Activated B cell treated with CpG ODN at 0.5 μM for 24 hours (primary cell): ENCODE measurements at regions of chr4 and their contacts with region 1.

Region 1: DNA sequence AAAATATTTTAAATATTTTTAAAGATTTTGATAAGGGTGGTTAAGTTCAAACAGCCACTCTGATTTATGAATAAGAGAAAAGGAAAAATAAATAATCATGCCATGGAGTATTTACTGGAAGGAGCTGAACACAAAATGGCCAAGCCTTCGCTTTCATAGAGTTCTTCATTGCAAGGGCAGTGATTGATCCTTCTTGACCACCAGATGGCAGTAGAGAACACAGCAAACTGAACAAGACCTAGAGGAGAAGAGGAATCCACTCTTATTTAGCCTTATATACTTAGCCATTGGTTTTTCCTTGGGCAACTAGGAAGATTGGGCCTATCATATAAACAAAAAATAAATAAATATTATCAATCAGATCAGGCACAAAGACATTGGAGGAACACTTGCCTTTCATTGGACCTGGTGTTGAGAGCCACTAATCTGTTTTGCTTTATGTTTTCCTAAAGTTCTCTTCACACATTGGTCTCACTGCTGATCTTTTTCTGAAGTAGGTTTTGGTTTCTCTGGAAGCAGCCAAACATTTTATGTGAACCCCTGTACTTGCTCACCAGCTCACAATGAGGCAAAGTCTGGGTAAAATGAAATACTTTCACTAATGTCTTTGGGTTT is 58.1 kb upstream of the PARM1 start:
- DNase-seq: no peak
- ATAC-seq: peak; percentile 81
- H3K4me3 Mint-ChIP-seq: no peak overlapping the region
- H3K27ac Mint-ChIP-seq: no peak overlapping the region
- H3K4me1 Mint-ChIP-seq: peaks cover 16% of the 10 kb centered on the region
- H3K27me3 Mint-ChIP-seq: peaks cover 9% of the 10 kb centered on the region
- CTCF ChIP-seq: peak; percentile 67

Region 2: GRCh38 chr4:74919783-74920182 is 44.9 kb after region 1 on chr4:
- CTCF ChIA-PET with region 1: interaction called, 16 read pairs
- POLR2A ChIA-PET with region 1: no interaction called
- intact Hi-C with region 1: no loop called
- DNase-seq: no peak
- ATAC-seq: no peak
- H3K4me3 Mint-ChIP-seq: peak overlapping the region; percentile 76
- H3K27ac Mint-ChIP-seq: peak overlapping the region; percentile 7
- H3K4me1 Mint-ChIP-seq: peaks cover 20% of the 10 kb centered on the region
- H3K27me3 Mint-ChIP-seq: peaks cover 2% of the 10 kb centered on the region
- CTCF ChIP-seq: no peak

Region 3: DNA sequence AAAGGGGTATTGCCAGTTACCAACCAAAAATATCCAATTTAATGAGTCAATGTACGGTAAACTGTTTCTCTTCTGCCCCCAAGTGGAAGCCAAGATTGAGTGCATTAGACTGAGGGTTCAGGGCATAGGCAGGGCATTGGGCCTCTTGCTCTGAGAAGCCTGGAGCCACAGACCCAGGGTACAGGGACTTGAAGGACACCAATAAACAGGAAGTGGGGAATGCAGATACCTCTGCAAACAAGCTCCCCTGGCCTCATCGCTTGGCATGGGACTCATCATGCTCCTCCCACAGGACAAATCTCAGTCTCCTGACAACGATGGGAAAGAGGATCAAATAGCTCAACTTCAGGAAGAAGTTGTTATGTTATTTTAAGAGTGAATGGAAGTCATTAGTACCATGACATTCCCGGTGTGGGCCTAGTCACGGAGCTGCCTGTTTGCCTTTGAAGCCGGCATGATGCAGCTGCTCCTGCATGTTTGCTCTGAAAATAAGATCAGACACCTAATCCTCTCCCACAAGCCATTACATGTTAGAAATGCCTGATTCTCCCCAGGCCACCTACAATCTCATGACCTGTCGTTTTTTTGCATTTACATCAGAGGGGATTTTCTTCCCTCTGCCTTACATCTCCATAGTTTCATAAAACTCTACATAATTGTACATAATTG is 415.2 kb after region 1 on chr4:
- CTCF ChIA-PET with region 1: interaction called, 68 read pairs
- POLR2A ChIA-PET with region 1: no interaction called
- intact Hi-C with region 1: loop called (anchors 1 kb)
- DNase-seq: no peak
- ATAC-seq: peak; percentile 49
- H3K4me3 Mint-ChIP-seq: no peak overlapping the region
- H3K27ac Mint-ChIP-seq: no peak overlapping the region
- H3K4me1 Mint-ChIP-seq: peaks cover 8% of the 10 kb centered on the region
- H3K27me3 Mint-ChIP-seq: no peaks in the 10 kb centered on the region
- CTCF ChIP-seq: peak; percentile 25

Region 4: DNA sequence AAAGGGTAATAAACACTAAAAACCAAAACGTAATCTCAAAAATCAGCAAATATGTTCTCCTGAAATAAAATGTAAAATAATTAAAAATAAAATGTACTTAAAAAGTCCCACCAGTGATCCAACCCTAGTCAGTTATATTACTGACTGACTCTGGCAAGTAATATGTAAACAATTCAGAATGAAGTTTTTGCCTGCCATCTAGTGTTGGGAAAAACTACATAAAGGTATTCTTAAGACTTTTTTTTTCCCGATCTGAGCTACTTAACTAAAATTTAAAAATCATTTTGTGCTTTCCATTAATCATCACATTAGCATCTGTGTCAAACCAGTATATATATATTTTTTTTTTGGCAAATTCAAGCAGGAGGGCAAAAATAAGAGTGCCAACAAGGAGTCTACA is 615.3 kb after region 1 on chr4:
- CTCF ChIA-PET with region 1: interaction called, 17 read pairs
- POLR2A ChIA-PET with region 1: no interaction called
- intact Hi-C with region 1: loop called (anchors 1 kb)
- DNase-seq: no peak
- ATAC-seq: no peak
- H3K4me3 Mint-ChIP-seq: no peak overlapping the region
- H3K27ac Mint-ChIP-seq: no peak overlapping the region
- H3K4me1 Mint-ChIP-seq: no peaks in the 10 kb centered on the region
- H3K27me3 Mint-ChIP-seq: no peaks in the 10 kb centered on the region
- CTCF ChIP-seq: no peak

Region 5: DNA sequence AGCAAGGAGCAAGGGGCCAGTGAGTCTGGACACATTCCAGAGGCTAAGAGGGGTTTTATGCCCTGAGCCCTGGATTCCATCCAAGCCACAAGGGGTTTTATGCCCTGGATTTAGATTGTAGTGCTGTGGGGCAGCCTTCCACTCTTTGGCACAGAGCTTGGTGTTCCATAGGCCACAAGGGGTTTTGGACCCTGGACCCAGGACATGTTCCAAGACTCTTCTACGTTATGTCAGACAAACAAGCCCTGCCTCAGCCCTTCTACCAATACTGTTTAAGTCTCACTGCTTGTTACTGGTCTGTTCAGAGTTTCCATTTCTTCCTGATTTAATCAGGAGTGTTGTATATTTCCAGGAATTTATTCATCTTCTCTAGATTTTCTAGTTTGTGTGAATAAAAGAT is 1351.6 kb after region 1 on chr4:
- CTCF ChIA-PET with region 1: no interaction called
- POLR2A ChIA-PET with region 1: no interaction called
- intact Hi-C with region 1: no loop called
- DNase-seq: no peak
- ATAC-seq: no peak
- H3K4me3 Mint-ChIP-seq: no peak overlapping the region
- H3K27ac Mint-ChIP-seq: no peak overlapping the region
- H3K4me1 Mint-ChIP-seq: no peaks in the 10 kb centered on the region
- H3K27me3 Mint-ChIP-seq: peaks cover 15% of the 10 kb centered on the region
- CTCF ChIP-seq: no peak